ENCODE measurements at regions of chr18 and their contacts with region 1.

Region 1: DNA sequence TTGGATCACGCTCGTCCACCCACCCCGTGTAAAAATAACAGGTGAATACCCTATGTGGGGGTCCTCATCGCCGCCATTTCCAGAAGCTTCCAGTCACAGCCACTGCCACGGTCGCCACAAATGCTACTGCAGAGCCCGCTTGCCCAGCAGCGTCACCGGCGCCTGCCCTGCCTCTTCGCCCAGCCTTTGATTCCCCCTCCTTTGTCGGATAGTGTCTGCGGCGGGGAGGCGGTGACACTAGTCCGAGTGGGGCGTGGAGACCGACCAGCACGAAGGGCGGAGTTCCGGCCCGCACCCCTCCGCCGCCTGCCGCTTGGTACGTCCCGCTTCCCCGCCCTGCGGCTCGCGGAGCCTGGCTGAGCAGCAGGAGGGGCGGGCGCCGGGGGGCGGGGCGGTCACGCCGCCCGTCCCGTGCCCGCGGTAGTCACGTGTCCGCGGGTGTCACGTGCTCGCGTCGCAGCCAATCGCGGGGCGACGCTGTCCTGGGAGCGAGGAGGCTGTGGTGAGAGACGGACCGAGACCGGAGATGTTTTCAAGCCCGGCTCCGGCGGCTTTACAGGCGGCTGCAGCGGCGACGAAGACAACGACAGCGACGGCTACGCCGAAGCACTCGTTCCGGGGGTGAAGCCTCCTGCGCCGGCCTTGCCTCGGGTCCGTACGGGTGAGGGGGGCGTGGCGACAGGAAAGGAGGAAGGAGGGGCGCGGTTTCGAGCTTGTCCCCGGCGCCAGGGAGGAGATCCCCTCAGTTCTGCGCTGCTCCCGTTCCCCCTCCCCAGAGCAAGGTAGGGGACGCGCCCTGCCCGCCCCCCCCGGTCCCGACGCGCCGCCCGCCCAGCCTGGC is at the start of gene ANKRD12:
- DNase-seq: peak; percentile 96
- ATAC-seq: peak; percentile 81
- H3K4me3 Mint-ChIP-seq: peak within 1 kb of the TSS; percentile 97
- H3K27ac Mint-ChIP-seq: peak within 1 kb of the TSS; percentile 99
- H3K4me1 Mint-ChIP-seq: peaks cover 50% of the 10 kb centered on the region
- H3K27me3 Mint-ChIP-seq: no peaks in the 10 kb centered on the region
- CTCF ChIP-seq: no peak
- total RNA-seq, gene ANKRD12: 62.5 to 68.4 TPM

Region 2: DNA sequence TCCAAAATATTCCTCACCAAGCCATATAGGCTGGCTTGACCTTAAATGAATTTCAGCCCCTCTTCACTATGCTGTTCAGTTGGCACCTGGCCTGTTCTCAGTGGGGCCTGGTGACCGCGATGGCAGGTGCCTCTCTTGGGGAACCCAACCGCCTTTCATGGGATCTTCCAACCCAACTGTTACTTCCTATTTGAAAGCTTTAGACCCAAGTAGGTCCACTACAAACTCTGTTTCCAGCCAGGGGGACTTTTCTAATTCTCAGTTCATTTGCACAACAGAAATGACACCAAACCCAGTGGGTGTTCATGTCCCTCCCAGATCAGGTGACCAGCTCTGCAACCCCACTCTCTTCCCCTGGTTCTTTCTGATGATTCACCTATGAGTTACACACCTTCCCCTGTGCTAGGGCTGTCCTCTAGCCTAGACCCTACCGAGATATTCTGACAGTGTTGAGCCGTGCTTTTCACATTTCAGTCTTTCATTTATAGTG is 69.7 kb before region 1 on chr18:
- CTCF ChIA-PET with region 1: interaction called, 48 read pairs
- POLR2A ChIA-PET with region 1: interaction called, 4 read pairs
- intact Hi-C with region 1: no loop called
- DNase-seq: no peak
- ATAC-seq: peak; percentile 87
- H3K4me3 Mint-ChIP-seq: no peak overlapping the region
- H3K27ac Mint-ChIP-seq: peak overlapping the region; percentile 67
- H3K4me1 Mint-ChIP-seq: peaks cover 23% of the 10 kb centered on the region
- H3K27me3 Mint-ChIP-seq: no peaks in the 10 kb centered on the region
- CTCF ChIP-seq: no peak

Region 3: DNA sequence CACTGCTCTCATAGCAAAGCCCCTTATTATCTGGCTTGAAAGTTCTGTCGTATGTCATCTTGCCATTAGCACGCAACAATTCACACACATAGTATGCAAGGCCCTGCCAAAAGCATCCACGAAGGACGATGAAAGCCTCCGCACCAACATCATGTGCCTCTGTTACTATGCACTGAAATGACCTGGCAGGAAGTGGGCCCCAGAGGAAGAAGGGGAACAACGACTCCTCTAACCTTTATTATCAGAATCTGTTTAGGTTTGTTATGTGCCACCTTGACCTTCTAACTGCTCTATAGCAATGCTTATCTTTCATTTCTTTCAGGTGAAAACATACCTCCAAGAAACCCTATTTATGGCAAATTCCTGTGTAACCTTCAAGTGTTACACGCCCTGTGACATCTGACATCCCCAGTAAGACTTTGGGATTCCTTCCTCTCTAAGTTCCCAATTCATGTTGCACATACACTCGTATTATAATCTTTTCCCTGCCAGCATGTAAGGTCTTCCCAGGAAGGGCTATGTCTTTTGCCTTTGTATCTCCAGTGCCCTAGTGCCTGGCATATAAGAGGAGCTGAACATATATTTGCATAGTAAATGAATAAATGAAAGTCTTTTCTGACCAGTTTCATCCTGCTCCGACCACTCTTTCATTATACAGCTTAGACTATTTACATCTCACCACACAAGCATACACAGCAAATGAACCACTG is 41.1 kb before region 1 on chr18:
- CTCF ChIA-PET with region 1: interaction called, 4 read pairs
- POLR2A ChIA-PET with region 1: interaction called, 155 read pairs
- intact Hi-C with region 1: loop called (anchors 5 kb)
- DNase-seq: peak; percentile 89
- ATAC-seq: peak; percentile 71
- H3K4me3 Mint-ChIP-seq: peak overlapping the region; percentile 51
- H3K27ac Mint-ChIP-seq: peak overlapping the region; percentile 96
- H3K4me1 Mint-ChIP-seq: peaks cover 56% of the 10 kb centered on the region
- H3K27me3 Mint-ChIP-seq: no peaks in the 10 kb centered on the region
- CTCF ChIP-seq: no peak

Region 4: DNA sequence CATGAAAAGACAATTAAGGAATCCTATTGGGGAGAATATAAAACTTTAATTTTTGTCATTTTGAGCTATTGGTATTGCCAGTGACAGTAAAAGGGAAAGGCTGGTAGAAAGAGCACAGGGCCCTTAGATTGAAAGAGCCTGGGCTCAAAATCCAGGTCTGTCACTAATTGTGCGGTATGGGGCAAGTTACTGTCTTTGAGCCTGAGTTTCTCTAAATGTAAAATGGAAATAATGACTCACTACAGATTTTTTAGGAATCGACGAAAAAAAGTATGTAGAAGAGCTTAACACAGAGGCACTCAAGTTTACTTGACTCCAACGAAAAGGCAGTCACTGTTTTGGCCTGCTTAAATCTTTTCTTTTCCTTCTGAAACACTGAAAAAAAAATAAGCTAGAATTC is 27.0 kb before region 1 on chr18:
- CTCF ChIA-PET with region 1: interaction called, 31 read pairs
- POLR2A ChIA-PET with region 1: interaction called, 278 read pairs
- intact Hi-C with region 1: loop called (anchors 5 kb)
- DNase-seq: no peak
- ATAC-seq: peak; percentile 37
- H3K4me3 Mint-ChIP-seq: peak overlapping the region; percentile 46
- H3K27ac Mint-ChIP-seq: peak overlapping the region; percentile 76
- H3K4me1 Mint-ChIP-seq: peaks cover 85% of the 10 kb centered on the region
- H3K27me3 Mint-ChIP-seq: no peaks in the 10 kb centered on the region
- CTCF ChIP-seq: no peak

Region 5: GRCh38 chr18:9126337-9126736 is 10.2 kb before region 1 on chr18:
- CTCF ChIA-PET with region 1: interaction called, 7 read pairs
- POLR2A ChIA-PET with region 1: interaction called, 278 read pairs
- intact Hi-C with region 1: no loop called
- DNase-seq: no peak
- ATAC-seq: no peak
- H3K4me3 Mint-ChIP-seq: no peak overlapping the region
- H3K27ac Mint-ChIP-seq: peak overlapping the region; percentile 42
- H3K4me1 Mint-ChIP-seq: peaks cover 54% of the 10 kb centered on the region
- H3K27me3 Mint-ChIP-seq: no peaks in the 10 kb centered on the region
- CTCF ChIP-seq: no peak

Measured in activated CD8-positive, alpha-beta T cell treated with anti-CD3 and anti-CD28 coated beads for 36 hours (primary cell).